Prostate gland (tissue), 2 donors: ENCODE measurements at regions of chr7 and their contacts with region 1.

Region 1: DNA sequence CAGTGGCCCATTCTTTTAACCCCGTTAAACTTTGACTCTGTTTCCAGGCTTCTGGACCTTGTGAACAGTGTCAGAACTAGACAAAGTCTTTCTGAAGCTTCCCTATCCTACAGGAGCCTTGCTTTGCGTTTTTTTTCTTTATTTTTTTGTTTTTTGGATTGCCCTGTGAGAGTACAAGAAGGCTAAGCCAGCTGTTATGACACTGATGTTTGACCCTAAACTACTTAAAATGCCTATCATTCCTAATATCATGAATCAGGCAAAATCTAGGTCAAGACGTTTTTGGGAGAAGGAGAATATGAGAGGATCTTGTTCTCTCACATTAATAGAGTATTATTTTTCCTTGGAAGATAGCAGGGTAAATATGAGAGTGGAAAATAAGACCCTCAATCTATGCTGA is 79.8 kb downstream of the EPDR1 start:
- DNase-seq: no peak
- H3K4me3 ChIP-seq: no peak overlapping the region
- H3K27ac ChIP-seq: no peak overlapping the region
- H3K4me1 ChIP-seq: no peaks in the 10 kb centered on the region
- H3K27me3 ChIP-seq: no peaks in the 10 kb centered on the region
- CTCF ChIP-seq: no peak
- POLR2A ChIP-seq: no peak

Region 2: DNA sequence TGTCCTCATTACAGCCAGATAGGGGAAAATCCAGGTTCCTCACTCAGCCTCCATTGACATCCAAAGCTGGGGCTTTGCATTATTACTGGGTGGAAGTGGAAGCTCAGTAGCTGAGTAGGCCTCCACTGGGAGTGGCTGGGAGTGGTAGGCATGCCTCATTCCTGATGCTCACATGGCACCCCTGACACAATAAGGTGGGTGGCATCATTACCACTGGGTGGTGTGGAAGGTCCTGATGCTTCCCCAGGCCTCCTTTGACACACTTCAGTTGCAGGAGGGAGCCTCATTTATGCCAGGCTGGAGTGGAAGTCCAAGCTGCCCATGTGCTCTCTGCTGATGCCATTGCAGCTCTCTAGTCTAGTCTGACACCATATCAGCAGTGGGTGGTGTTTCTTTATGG is 364.9 kb before region 1 on chr7:
- intact Hi-C with region 1: no loop called
- DNase-seq: no peak
- H3K4me3 ChIP-seq: no peak overlapping the region
- H3K27ac ChIP-seq: no peak overlapping the region
- H3K4me1 ChIP-seq: no peaks in the 10 kb centered on the region
- H3K27me3 ChIP-seq: no peaks in the 10 kb centered on the region
- CTCF ChIP-seq: no peak
- POLR2A ChIP-seq: no peak

Region 3: GRCh38 chr7:37916673-37917660 is 83.3 kb before region 1 on chr7 and contains the start of gene SFRP4:
- intact Hi-C with region 1: loop called (anchors 5 kb)
- DNase-seq: no peak
- H3K4me3 ChIP-seq: peak within 1 kb of the TSS; percentile 36 to 42
- H3K27ac ChIP-seq: peak within 1 kb of the TSS; percentile 39 to 62
- H3K4me1 ChIP-seq: peaks cover 4% of the 10 kb centered on the region
- H3K27me3 ChIP-seq: no peaks in the 10 kb centered on the region
- CTCF ChIP-seq: peak; percentile 12 to 68 (median 60)
- POLR2A ChIP-seq: no peak
- total RNA-seq, gene SFRP4: 3.2 to 25.3 TPM

Region 4: DNA sequence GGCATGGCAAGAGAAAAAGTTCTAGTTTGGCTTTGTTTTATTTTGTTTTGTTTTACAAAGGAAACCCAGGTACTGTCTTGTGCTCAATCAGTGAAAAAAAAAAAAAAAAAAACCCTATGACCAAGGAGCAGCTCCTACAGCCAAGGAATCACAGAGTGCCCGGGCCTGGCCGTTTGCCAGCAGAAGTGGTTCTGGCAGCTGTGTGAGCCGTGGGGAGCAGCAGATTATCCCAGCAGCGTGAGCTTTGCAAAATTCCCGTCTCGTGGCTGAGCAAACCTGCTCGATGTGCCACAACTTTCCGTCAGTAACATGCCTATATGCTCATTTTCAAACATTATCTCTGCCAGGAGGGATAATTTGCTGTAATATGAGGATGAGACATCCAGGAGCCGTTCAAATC is 1271.1 kb after region 1 on chr7:
- intact Hi-C with region 1: no loop called
- DNase-seq: peak; percentile 53
- H3K4me3 ChIP-seq: no peak overlapping the region
- H3K27ac ChIP-seq: no peak overlapping the region
- H3K4me1 ChIP-seq: no peaks in the 10 kb centered on the region
- H3K27me3 ChIP-seq: no peaks in the 10 kb centered on the region
- CTCF ChIP-seq: no peak
- POLR2A ChIP-seq: no peak